HCT116 (cell line): ENCODE measurements at regions of chr5 and their contacts with region 1.

Region 1: GRCh38 chr5:98773464-98774191 is at the start of gene RGMB:
- DNase-seq: peak; percentile 98
- ATAC-seq: peak; percentile 86
- H3K4me3 ChIP-seq: peak within 1 kb of the TSS; percentile 70 to 83
- H3K27ac ChIP-seq: peak within 1 kb of the TSS; percentile 87
- H3K4me1 ChIP-seq: peaks cover 19 to 53% of the 10 kb centered on the region in 2 experiments
- H3K27me3 ChIP-seq: peaks cover 6% of the 10 kb centered on the region; the same call in 1 of the 2 replicates
- CTCF ChIP-seq: no peak
- POLR2A ChIP-seq: peak; percentile 57
- RAD21 ChIP-seq: no peak
- total RNA-seq, gene RGMB: 18.3 TPM

Region 2: GRCh38 chr5:97183100-97183929 is 1590.3 kb before region 1 on chr5 and contains the start of gene RIOK2:
- CTCF ChIA-PET with region 1: no interaction called
- POLR2A ChIA-PET with region 1: no interaction called
- RAD21 ChIA-PET with region 1: no interaction called
- intact Hi-C with region 1: loop called (anchors 2 kb)
- DNase-seq: peak; percentile 95
- ATAC-seq: peak; percentile 90
- H3K4me3 ChIP-seq: peak within 1 kb of the TSS; percentile 96
- H3K27ac ChIP-seq: peak within 1 kb of the TSS; percentile 75
- H3K4me1 ChIP-seq: peaks cover 6 to 18% of the 10 kb centered on the region in 2 experiments
- H3K27me3 ChIP-seq: no peaks in the 10 kb centered on the region
- CTCF ChIP-seq: no peak
- POLR2A ChIP-seq: peak; percentile 41
- RAD21 ChIP-seq: no peak
- total RNA-seq, gene RIOK2: 27.1 TPM

Region 3: DNA sequence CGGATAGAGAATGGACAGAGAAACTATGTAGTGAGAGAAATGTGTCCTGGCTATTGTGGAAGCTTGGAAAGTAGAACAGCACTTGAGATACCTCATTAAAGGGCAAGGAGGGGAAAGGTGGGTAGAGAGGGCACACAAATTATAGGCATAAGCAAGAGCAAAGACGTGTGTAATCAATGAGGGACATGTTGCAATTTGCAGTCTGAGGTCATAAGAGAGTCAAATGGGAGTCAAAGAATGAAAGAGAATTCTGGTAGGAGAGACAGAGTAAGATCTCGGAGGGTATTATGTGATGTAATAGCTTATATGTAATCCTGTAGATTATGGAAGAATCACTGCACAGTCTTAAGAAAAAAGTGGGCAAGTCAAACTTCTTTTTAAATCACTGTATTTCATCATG is 312.1 kb before region 1 on chr5:
- CTCF ChIA-PET with region 1: no interaction called
- POLR2A ChIA-PET with region 1: no interaction called
- RAD21 ChIA-PET with region 1: no interaction called
- intact Hi-C with region 1: no loop called
- DNase-seq: no peak
- ATAC-seq: no peak
- H3K4me3 ChIP-seq: no peak overlapping the region
- H3K27ac ChIP-seq: no peak overlapping the region
- H3K4me1 ChIP-seq: no peaks in the 10 kb centered on the region
- H3K27me3 ChIP-seq: no peaks in the 10 kb centered on the region
- CTCF ChIP-seq: no peak
- POLR2A ChIP-seq: no peak
- RAD21 ChIP-seq: no peak

Region 4: GRCh38 chr5:99191206-99191745 is 417.6 kb after region 1 on chr5:
- CTCF ChIA-PET with region 1: no interaction called
- POLR2A ChIA-PET with region 1: no interaction called
- RAD21 ChIA-PET with region 1: no interaction called
- intact Hi-C with region 1: no loop called
- DNase-seq: no peak
- ATAC-seq: no peak
- H3K4me3 ChIP-seq: no peak overlapping the region
- H3K27ac ChIP-seq: no peak overlapping the region
- H3K4me1 ChIP-seq: no peaks in the 10 kb centered on the region; a peak in 1 of 4 replicates
- H3K27me3 ChIP-seq: peaks cover 15% of the 10 kb centered on the region; the same call in 1 of the 2 replicates
- CTCF ChIP-seq: no peak
- POLR2A ChIP-seq: no peak
- RAD21 ChIP-seq: no peak

Region 5: DNA sequence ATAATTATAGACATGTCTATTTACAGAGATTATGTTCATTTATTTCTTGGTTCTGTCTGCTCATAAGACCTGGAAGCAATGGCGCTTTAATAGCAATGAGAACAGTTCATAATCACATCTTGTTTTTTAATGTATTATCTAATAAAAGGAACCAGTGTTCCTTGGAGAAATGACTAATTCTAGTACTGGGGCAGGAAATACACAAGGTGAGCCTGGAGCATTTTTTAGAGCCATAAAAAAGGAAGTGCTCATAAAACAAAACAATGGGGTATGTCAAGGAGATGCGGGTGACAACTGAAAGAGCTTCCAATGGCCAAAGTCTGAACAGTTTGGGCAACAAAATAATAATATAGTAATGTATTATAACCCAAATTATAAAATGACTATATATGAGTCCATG is 687.1 kb after region 1 on chr5:
- CTCF ChIA-PET with region 1: no interaction called
- POLR2A ChIA-PET with region 1: no interaction called
- RAD21 ChIA-PET with region 1: no interaction called
- intact Hi-C with region 1: no loop called
- DNase-seq: no peak
- ATAC-seq: no peak
- H3K4me3 ChIP-seq: no peak overlapping the region
- H3K27ac ChIP-seq: no peak overlapping the region
- H3K4me1 ChIP-seq: no peaks in the 10 kb centered on the region
- H3K27me3 ChIP-seq: no peaks in the 10 kb centered on the region
- CTCF ChIP-seq: no peak
- POLR2A ChIP-seq: no peak
- RAD21 ChIP-seq: no peak